ENCODE measurements at regions of chr5 and their contacts with region 1.

Region 1: DNA sequence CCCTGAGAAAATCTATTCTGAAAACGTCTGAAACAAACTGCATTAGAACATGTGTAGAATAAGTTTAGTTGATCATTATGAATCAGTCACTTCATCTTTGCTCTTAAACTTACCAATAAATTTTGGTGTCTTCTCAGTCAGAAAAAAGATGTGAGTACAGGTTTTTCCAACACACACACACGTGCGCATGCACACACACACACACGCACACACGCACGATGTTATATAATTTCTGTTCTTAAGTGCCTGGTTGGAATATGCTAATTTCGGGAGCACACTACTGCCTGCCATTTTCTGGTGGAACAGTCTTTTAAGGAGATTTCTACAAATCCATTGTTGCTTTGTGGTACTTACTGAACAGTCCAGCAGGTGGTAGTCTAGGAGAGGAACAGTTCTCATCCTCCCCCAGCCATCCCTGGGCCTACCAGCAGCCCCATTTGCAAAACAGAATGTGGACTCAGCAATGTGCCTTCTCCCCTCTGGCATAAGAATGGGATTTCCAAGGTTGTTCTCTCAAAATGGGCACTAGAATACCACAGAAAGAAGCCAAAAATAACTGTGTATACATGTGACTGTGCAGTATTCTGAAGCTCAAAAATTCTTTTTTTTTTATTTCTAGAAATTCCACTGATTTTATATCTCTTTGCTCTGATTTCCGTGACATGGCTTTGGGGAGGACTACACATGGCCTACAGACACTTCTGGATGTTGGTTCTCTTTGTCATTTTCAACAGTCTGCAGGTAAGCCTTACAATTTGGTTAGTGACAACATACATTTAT is 281.3 kb downstream of the ARRDC3 start:
- DNase-seq: peak; percentile 21
- ATAC-seq: peak; percentile 99
- H3K4me3 ChIP-seq: no peak overlapping the region
- H3K27ac ChIP-seq: no peak overlapping the region
- H3K4me1 ChIP-seq: no peaks in the 10 kb centered on the region
- H3K27me3 ChIP-seq: no peaks in the 10 kb centered on the region
- CTCF ChIP-seq: peak; percentile 63 to 84 (median 70); a peak in 5 of 6 replicates
- EP300 ChIP-seq: no peak
- POLR2A ChIP-seq: no peak
- RAD21 ChIP-seq: peak; percentile 92

Region 2: GRCh38 chr5:90866333-90866732 is 235.5 kb before region 1 on chr5:
- CTCF ChIA-PET with region 1: interaction called, 3 read pairs
- POLR2A ChIA-PET with region 1: no interaction called
- RAD21 ChIA-PET with region 1: no interaction called
- SMC1A ChIA-PET with region 1: no interaction called
- in situ Hi-C with region 1: no loop called
- intact Hi-C with region 1: loop called (anchors 2 kb)
- DNase-seq: no peak
- ATAC-seq: peak; percentile 67
- H3K4me3 ChIP-seq: no peak overlapping the region
- H3K27ac ChIP-seq: no peak overlapping the region
- H3K4me1 ChIP-seq: no peaks in the 10 kb centered on the region
- H3K27me3 ChIP-seq: no peaks in the 10 kb centered on the region
- CTCF ChIP-seq: peak in 2 of 3 experiments; percentile 23 to 44; a peak in 3 of 6 replicates
- EP300 ChIP-seq: no peak
- POLR2A ChIP-seq: no peak
- RAD21 ChIP-seq: peak; percentile 55; the same call in 1 of the 2 replicates

Region 3: DNA sequence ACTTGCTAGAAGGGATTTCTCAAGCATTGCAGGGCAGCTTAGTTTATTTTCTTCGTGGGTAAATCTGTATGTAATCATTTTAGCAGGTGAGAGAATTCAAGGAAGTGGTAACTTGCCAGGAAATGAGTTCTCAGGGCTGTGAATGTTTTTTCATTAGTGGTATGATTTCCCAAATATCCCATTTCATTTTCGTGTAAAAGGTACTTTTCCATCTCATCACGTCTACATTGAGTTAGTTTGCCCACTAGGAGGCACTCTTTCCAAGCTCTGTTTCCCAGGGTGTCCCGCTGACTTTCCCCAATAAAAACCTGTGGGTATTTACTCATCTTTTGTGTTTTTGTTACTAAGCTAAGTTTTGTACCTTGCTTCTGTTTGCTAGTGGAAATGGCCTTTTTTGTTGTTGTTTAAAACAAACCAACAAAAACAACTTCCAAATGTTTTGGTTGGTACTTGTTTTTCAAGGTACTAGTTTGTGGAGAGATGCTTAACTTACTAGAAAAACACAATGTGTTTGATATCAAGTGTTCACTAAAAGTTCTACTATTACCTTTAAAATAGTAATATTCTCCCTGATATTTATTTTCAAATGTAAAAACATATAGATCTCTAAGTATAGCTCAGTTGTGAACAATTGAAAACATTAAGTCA is 169.6 kb before region 1 on chr5:
- CTCF ChIA-PET with region 1: interaction called, 12 read pairs
- POLR2A ChIA-PET with region 1: no interaction called
- RAD21 ChIA-PET with region 1: interaction called, 7 read pairs
- SMC1A ChIA-PET with region 1: interaction called, 10 read pairs
- in situ Hi-C with region 1: no loop called
- intact Hi-C with region 1: loop called (anchors 1 kb)
- DNase-seq: peak; percentile 12
- ATAC-seq: peak; percentile 74
- H3K4me3 ChIP-seq: no peak overlapping the region
- H3K27ac ChIP-seq: no peak overlapping the region
- H3K4me1 ChIP-seq: no peaks in the 10 kb centered on the region
- H3K27me3 ChIP-seq: no peaks in the 10 kb centered on the region
- CTCF ChIP-seq: peak; percentile 69 to 74 (median 71)
- EP300 ChIP-seq: no peak
- POLR2A ChIP-seq: no peak
- RAD21 ChIP-seq: peak; percentile 83

Region 4: DNA sequence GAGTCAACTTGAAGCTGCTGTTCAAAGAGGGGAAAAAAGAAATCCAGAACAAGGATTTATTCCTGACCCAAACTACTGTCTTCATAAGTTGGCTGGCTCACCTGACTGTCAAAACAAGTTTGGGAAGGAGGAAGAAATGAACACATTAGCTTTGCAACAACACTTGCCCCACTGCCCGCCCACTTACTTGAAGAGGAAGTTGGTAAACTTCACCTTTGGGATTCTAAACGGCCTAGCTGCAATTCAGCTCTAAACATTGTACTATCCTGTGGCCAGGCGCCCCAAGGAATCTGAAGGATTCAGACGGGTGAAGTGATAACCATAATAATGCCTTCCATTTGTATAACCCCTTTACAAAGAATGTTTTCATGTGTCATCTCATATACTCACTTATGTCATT is 81.9 kb after region 1 on chr5:
- CTCF ChIA-PET with region 1: interaction called, 12 read pairs
- POLR2A ChIA-PET with region 1: no interaction called
- RAD21 ChIA-PET with region 1: no interaction called
- SMC1A ChIA-PET with region 1: interaction called, 3 read pairs
- in situ Hi-C with region 1: no loop called
- intact Hi-C with region 1: no loop called
- DNase-seq: no peak
- ATAC-seq: no peak
- H3K4me3 ChIP-seq: no peak overlapping the region
- H3K27ac ChIP-seq: no peak overlapping the region
- H3K4me1 ChIP-seq: peaks cover 5% of the 10 kb centered on the region; the same call in 1 of the 2 replicates
- H3K27me3 ChIP-seq: no peaks in the 10 kb centered on the region
- CTCF ChIP-seq: no peak
- EP300 ChIP-seq: no peak
- POLR2A ChIP-seq: no peak
- RAD21 ChIP-seq: no peak

Region 5: GRCh38 chr5:91219803-91220371 is 118.1 kb after region 1 on chr5:
- CTCF ChIA-PET with region 1: interaction called, 7 read pairs
- POLR2A ChIA-PET with region 1: no interaction called
- RAD21 ChIA-PET with region 1: interaction called, 5 read pairs
- SMC1A ChIA-PET with region 1: interaction called, 5 read pairs
- in situ Hi-C with region 1: loop called (anchors 5 kb)
- intact Hi-C with region 1: loop called (anchors 2 kb)
- DNase-seq: no peak
- ATAC-seq: no peak; the same call in 2 of the 3 replicates
- H3K4me3 ChIP-seq: no peak overlapping the region
- H3K27ac ChIP-seq: no peak overlapping the region
- H3K4me1 ChIP-seq: no peaks in the 10 kb centered on the region
- H3K27me3 ChIP-seq: no peaks in the 10 kb centered on the region; a peak in 1 of 4 replicates
- CTCF ChIP-seq: peak; percentile 36 to 47 (median 39)
- EP300 ChIP-seq: no peak
- POLR2A ChIP-seq: no peak
- RAD21 ChIP-seq: peak; percentile 41

Region 6: DNA sequence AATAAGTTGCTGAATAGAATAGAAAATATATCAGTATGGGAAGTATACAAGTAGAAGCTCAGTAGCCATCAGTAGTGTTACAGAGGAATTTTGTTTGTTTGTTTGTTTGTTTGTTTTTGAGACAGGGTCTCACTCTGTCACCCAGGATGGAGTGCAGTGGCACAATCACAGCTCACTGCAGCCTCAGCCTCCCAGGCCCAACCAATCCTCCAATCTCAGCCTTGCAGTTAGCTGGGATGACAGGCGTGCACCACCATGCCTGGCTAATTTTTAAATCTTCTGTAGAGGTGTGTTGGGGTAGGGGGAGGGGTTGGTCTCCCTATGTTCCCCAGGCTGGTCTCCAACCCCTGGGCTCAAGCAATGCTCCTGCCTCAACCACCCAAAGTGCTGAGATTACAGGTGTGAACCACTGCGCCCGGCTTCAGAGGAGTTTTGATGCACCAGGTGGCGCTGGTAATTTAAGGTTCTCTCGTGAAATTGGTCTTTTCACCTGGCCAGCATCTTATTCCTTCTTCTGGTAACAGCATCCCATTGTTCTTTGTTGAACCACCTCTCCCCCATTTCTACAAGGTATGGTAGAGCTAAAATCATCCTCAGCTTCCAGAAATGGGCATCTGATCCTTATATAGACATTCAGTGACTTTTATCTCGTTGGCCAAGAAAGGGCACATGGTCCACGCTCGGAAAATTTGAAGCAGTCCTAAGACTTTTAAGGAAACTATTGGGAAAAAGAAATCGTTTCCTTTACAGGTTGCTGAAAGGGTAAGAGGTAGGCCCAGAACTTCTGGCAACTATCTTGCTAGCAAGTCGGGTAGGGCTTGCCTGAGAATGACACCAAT is 124.3 kb after region 1 on chr5:
- CTCF ChIA-PET with region 1: interaction called, 3 read pairs
- POLR2A ChIA-PET with region 1: no interaction called
- RAD21 ChIA-PET with region 1: no interaction called
- SMC1A ChIA-PET with region 1: interaction called, 5 read pairs
- in situ Hi-C with region 1: loop called (anchors 5 kb)
- intact Hi-C with region 1: loop called (anchors 2 kb)
- DNase-seq: peak; percentile 8
- ATAC-seq: peak; percentile 84
- H3K4me3 ChIP-seq: no peak overlapping the region
- H3K27ac ChIP-seq: no peak overlapping the region
- H3K4me1 ChIP-seq: no peaks in the 10 kb centered on the region
- H3K27me3 ChIP-seq: no peaks in the 10 kb centered on the region; a peak in 1 of 4 replicates
- CTCF ChIP-seq: peak; percentile 53 to 71 (median 58); a peak in 5 of 6 replicates
- EP300 ChIP-seq: no peak
- POLR2A ChIP-seq: no peak
- RAD21 ChIP-seq: peak; percentile 84

Region 7: GRCh38 chr5:91280362-91281269 is 178.8 kb after region 1 on chr5:
- CTCF ChIA-PET with region 1: no interaction called
- POLR2A ChIA-PET with region 1: no interaction called
- RAD21 ChIA-PET with region 1: no interaction called
- SMC1A ChIA-PET with region 1: no interaction called
- in situ Hi-C with region 1: no loop called
- intact Hi-C with region 1: loop called (anchors 5 kb)
- DNase-seq: peak; percentile 65
- ATAC-seq: peak; percentile 97
- H3K4me3 ChIP-seq: peak overlapping the region; percentile 63
- H3K27ac ChIP-seq: peak overlapping the region; percentile 49
- H3K4me1 ChIP-seq: peaks cover 15% of the 10 kb centered on the region
- H3K27me3 ChIP-seq: no peaks in the 10 kb centered on the region; a peak in 1 of 4 replicates
- CTCF ChIP-seq: no peak
- EP300 ChIP-seq: peak; percentile 17 to 25; a peak in 2 of 4 replicates
- POLR2A ChIP-seq: peak; percentile 65
- RAD21 ChIP-seq: no peak